Activated naive CD4-positive, alpha-beta T cell treated with anti-CD3 and anti-CD28 coated beads, Interleukin-2, amount 10 ng/mL, durations not matched to agents 7 days and 5 days (primary cell): ENCODE measurements at regions of chr10 and their contacts with region 1.

Region 1: DNA sequence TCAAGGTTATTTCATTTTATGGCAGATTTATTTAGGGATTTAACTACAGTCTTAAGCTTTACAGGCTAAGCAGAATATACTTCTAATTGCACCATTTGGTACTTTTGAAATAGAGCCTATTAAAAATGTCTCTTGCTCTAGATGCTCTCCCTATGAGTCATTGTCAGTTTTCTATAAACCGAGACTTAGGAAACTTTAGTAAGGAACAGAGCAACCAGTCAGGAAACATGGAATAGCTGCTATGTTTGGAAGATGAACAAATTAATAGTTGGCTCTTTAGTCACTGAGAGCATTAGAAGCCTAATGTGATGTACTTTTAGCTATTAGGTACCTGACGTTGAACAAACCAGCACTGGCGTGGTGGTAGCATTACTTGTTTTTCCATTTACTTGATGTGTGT is 35.3 kb downstream of the INPP5F start:
- DNase-seq: no peak
- H3K4me3 Mint-ChIP-seq: no peak overlapping the region
- H3K27ac Mint-ChIP-seq: no peak overlapping the region
- H3K4me1 Mint-ChIP-seq: no peaks in the 10 kb centered on the region
- H3K27me3 Mint-ChIP-seq: no peaks in the 10 kb centered on the region

Region 2: GRCh38 chr10:119750391-119751230 is 10.5 kb before region 1 on chr10:
- CTCF ChIA-PET with region 1: interaction called, 10 read pairs
- DNase-seq: peak; percentile 72
- H3K4me3 Mint-ChIP-seq: no peak overlapping the region
- H3K27ac Mint-ChIP-seq: no peak overlapping the region
- H3K4me1 Mint-ChIP-seq: peaks cover 2% of the 10 kb centered on the region
- H3K27me3 Mint-ChIP-seq: no peaks in the 10 kb centered on the region

Region 3: GRCh38 chr10:120034236-120034635 is 273.1 kb after region 1 on chr10:
- CTCF ChIA-PET with region 1: no interaction called
- DNase-seq: no peak
- H3K4me3 Mint-ChIP-seq: no peak overlapping the region
- H3K27ac Mint-ChIP-seq: no peak overlapping the region
- H3K4me1 Mint-ChIP-seq: no peaks in the 10 kb centered on the region
- H3K27me3 Mint-ChIP-seq: peaks cover 4% of the 10 kb centered on the region